Caco-2 (cell line): ENCODE measurements at regions of chrX and their contacts with region 1.

Region 1: GRCh38 chrX:73581002-73581628 is 18.1 kb downstream of the CHIC1 start:
- DNase-seq: peak in 1 of 2 experiments; percentile 0
- H3K4me3 ChIP-seq: no peak overlapping the region
- H3K4me3 Mint-ChIP-seq: no peak overlapping the region
- H3K27ac Mint-ChIP-seq: no peak overlapping the region
- H3K4me1 ChIP-seq: no peaks in the 10 kb centered on the region
- H3K4me1 Mint-ChIP-seq: no peaks in the 10 kb centered on the region
- H3K27me3 ChIP-seq: no peaks in the 10 kb centered on the region
- H3K27me3 Mint-ChIP-seq: no peaks in the 10 kb centered on the region
- CTCF ChIP-seq: no peak

Region 2: DNA sequence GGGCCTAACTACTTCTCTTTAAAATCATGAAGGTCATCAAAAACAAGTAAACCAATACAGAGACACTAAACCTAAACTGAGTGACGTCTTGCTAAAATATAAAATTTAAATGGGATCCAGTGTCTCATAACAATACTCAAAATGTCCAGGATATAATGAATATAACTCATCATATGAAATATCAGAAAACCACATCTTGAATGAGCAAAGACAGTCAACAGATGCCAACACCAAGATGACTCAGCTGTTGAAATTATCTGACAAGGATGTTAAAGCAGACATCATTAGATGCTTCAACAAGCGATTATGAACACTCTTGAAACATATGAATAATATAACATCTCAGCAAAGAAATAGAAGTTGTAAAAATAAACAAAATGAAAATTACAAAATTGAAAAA is 374.7 kb before region 1 on chrX:
- CTCF ChIA-PET with region 1: no interaction called
- POLR2A ChIA-PET with region 1: no interaction called
- intact Hi-C with region 1: no loop called
- DNase-seq: no peak
- H3K4me3 ChIP-seq: no peak overlapping the region
- H3K4me3 Mint-ChIP-seq: no peak overlapping the region
- H3K27ac Mint-ChIP-seq: no peak overlapping the region
- H3K4me1 ChIP-seq: no peaks in the 10 kb centered on the region
- H3K4me1 Mint-ChIP-seq: no peaks in the 10 kb centered on the region
- H3K27me3 ChIP-seq: no peaks in the 10 kb centered on the region
- H3K27me3 Mint-ChIP-seq: no peaks in the 10 kb centered on the region
- CTCF ChIP-seq: no peak

Region 3: DNA sequence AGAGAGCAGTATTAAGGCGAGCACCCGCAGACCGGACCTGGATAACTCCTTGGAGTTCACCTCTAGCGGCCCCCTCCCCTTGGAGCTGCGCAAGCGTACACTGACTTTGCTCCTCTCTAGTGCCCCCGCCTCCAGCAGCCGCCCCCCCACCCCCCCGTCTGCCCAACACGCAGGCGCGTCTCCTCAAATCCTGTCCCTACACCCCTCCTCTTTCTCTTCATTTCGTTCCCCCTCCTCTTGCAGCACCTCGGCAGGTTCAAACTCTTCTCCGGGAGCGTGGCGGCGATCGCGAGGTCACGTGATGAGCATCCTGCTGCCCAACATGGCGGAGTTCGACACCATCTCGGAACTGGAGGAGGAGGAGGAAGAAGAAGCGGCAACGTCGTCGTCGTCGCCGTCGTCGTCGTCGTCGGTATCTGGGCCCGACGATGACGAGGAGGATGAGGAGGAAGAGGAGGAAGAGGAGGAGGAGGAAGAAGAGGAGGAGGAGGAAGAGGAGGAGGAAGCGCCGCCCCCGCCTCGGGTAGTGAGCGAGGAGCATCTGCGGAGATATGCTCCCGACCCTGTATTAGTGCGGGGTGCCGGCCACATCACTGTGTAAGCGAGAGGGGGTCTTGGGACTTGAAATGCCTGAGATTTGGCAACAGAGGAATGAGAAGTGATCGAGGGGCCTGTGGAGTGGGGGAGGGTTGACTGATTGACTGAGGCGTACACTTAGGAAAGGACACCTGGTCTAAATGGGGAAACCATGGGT is 18.0 kb before region 1 on chrX and contains the start of gene CHIC1:
- CTCF ChIA-PET with region 1: no interaction called
- POLR2A ChIA-PET with region 1: no interaction called
- intact Hi-C with region 1: loop called (anchors 2 kb)
- DNase-seq: peak; percentile 75 to 82
- H3K4me3 ChIP-seq: peak within 1 kb of the TSS; percentile 83
- H3K4me3 Mint-ChIP-seq: peak within 1 kb of the TSS; percentile 96
- H3K27ac Mint-ChIP-seq: peak within 1 kb of the TSS; percentile 92
- H3K4me1 ChIP-seq: no peaks in the 10 kb centered on the region
- H3K4me1 Mint-ChIP-seq: no peaks in the 10 kb centered on the region
- H3K27me3 ChIP-seq: no peaks in the 10 kb centered on the region
- H3K27me3 Mint-ChIP-seq: no peaks in the 10 kb centered on the region
- CTCF ChIP-seq: no peak
- total RNA-seq, gene CHIC1: 7.6 and 8.9 TPM in 2 replicates